ENCODE measurements at regions of chr19 and their contacts with region 1.

Region 1: GRCh38 chr19:44093931-44094765 is at the start of gene ZNF224:
- DNase-seq: peak; percentile 95
- H3K4me3 ChIP-seq: peak within 1 kb of the TSS; percentile 57 to 97 (median 95)
- H3K27ac ChIP-seq: peak within 1 kb of the TSS; percentile 42
- H3K4me1 ChIP-seq: peaks cover 8% of the 10 kb centered on the region
- H3K27me3 ChIP-seq: no peaks in the 10 kb centered on the region
- CTCF ChIP-seq: no peak
- POLR2A ChIP-seq: peak; percentile 59
- total RNA-seq, gene ZNF224: 19.4 and 21.8 TPM in 2 replicates

Region 2: GRCh38 chr19:43934985-43935708 is 159.0 kb before region 1 on chr19 and contains the start of gene ZNF45:
- CTCF ChIA-PET with region 1: interaction called, 4 read pairs
- POLR2A ChIA-PET with region 1: no interaction called
- dilution Hi-C with region 1: no loop called
- intact Hi-C with region 1: loop called (anchors 1 kb)
- DNase-seq: peak; percentile 93
- H3K4me3 ChIP-seq: peak within 1 kb of the TSS; percentile 43 to 94 (median 71)
- H3K27ac ChIP-seq: peak within 1 kb of the TSS; percentile 26
- H3K4me1 ChIP-seq: peaks cover 13% of the 10 kb centered on the region
- H3K27me3 ChIP-seq: no peaks in the 10 kb centered on the region
- CTCF ChIP-seq: no peak
- POLR2A ChIP-seq: peak; percentile 53
- total RNA-seq, gene ZNF45: 10.8 and 11.2 TPM in 2 replicates

Region 3: GRCh38 chr19:44032001-44032610 is 62.0 kb before region 1 on chr19:
- CTCF ChIA-PET with region 1: no interaction called
- POLR2A ChIA-PET with region 1: no interaction called
- dilution Hi-C with region 1: no loop called
- intact Hi-C with region 1: no loop called
- DNase-seq: no peak
- H3K4me3 ChIP-seq: no peak overlapping the region
- H3K27ac ChIP-seq: no peak overlapping the region
- H3K4me1 ChIP-seq: no peaks in the 10 kb centered on the region
- H3K27me3 ChIP-seq: no peaks in the 10 kb centered on the region
- CTCF ChIP-seq: no peak
- POLR2A ChIP-seq: no peak

Region 4: DNA sequence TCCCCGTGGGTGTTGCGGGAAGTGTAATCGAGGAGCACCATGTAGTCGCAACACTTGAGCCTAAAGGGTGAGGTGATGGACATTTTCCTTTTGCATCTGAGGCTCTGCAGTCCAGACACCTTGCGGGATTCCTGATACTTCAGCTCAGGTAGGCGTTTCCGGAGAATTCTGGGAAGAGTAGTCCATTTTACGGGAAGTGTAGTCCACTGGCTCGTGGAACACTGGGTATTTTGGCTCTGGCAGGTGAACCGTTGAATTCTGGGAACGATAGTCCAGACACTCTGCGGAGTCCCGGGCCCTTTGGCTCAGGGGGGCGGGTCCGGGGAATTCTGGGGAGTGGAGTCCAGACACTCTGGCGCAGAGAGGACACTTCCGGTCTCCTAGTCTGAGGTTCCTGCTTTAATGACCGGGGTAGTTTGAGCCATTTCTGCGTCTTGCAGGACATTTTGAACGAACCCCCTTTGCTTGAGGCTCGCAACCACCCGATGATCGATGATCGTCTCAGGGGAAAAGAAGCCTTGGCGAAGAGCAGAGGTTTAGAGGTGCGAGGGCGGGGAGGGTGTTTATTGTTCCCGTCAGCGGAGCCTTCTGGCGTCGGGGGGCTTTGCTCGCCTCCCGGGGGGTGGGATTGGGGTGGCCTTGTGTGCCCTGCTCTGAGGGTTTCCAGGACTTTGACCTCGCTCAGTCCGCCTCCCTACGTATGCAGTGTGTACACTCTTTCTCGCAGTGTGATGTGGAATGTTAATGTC is 42.3 kb before region 1 on chr19 and contains the start of gene ZNF223:
- CTCF ChIA-PET with region 1: no interaction called
- POLR2A ChIA-PET with region 1: no interaction called
- dilution Hi-C with region 1: no loop called
- intact Hi-C with region 1: loop called (anchors 1 kb)
- DNase-seq: peak; percentile 91
- H3K4me3 ChIP-seq: peak within 1 kb of the TSS; percentile 48 to 64 (median 61)
- H3K27ac ChIP-seq: no peak within 1 kb of the TSS
- H3K4me1 ChIP-seq: peaks cover 11% of the 10 kb centered on the region
- H3K27me3 ChIP-seq: peaks cover 4 to 9% of the 10 kb centered on the region in 2 experiments
- CTCF ChIP-seq: no peak
- POLR2A ChIP-seq: peak; percentile 53
- total RNA-seq, gene ZNF223: 3.4 and 3.7 TPM in 2 replicates

Region 5: GRCh38 chr19:44164673-44165512 is 70.7 kb after region 1 on chr19 and contains the start of gene ZNF226:
- CTCF ChIA-PET with region 1: interaction called, 3 read pairs
- POLR2A ChIA-PET with region 1: no interaction called
- dilution Hi-C with region 1: no loop called
- intact Hi-C with region 1: loop called (anchors 1 kb)
- DNase-seq: peak; percentile 98
- H3K4me3 ChIP-seq: peak within 1 kb of the TSS; percentile 56 to 87 (median 66)
- H3K27ac ChIP-seq: peak within 1 kb of the TSS; percentile 74
- H3K4me1 ChIP-seq: peaks cover 3% of the 10 kb centered on the region
- H3K27me3 ChIP-seq: no peaks in the 10 kb centered on the region
- CTCF ChIP-seq: no peak
- POLR2A ChIP-seq: no peak
- total RNA-seq, gene ZNF226: 19.7 and 19.8 TPM in 2 replicates

Region 6: GRCh38 chr19:44356383-44357111 is 262.4 kb after region 1 on chr19 and contains the start of gene ZNF112:
- CTCF ChIA-PET with region 1: no interaction called
- POLR2A ChIA-PET with region 1: no interaction called
- dilution Hi-C with region 1: no loop called
- intact Hi-C with region 1: loop called (anchors 1 kb)
- DNase-seq: peak; percentile 93
- H3K4me3 ChIP-seq: peak within 1 kb of the TSS; percentile 41 to 60 (median 58)
- H3K27ac ChIP-seq: no peak within 1 kb of the TSS
- H3K4me1 ChIP-seq: peaks cover 4% of the 10 kb centered on the region
- H3K27me3 ChIP-seq: no peaks in the 10 kb centered on the region
- CTCF ChIP-seq: no peak
- POLR2A ChIP-seq: peak; percentile 56
- total RNA-seq, gene ZNF112: 4.6 and 7.5 TPM in 2 replicates

Region 7: DNA sequence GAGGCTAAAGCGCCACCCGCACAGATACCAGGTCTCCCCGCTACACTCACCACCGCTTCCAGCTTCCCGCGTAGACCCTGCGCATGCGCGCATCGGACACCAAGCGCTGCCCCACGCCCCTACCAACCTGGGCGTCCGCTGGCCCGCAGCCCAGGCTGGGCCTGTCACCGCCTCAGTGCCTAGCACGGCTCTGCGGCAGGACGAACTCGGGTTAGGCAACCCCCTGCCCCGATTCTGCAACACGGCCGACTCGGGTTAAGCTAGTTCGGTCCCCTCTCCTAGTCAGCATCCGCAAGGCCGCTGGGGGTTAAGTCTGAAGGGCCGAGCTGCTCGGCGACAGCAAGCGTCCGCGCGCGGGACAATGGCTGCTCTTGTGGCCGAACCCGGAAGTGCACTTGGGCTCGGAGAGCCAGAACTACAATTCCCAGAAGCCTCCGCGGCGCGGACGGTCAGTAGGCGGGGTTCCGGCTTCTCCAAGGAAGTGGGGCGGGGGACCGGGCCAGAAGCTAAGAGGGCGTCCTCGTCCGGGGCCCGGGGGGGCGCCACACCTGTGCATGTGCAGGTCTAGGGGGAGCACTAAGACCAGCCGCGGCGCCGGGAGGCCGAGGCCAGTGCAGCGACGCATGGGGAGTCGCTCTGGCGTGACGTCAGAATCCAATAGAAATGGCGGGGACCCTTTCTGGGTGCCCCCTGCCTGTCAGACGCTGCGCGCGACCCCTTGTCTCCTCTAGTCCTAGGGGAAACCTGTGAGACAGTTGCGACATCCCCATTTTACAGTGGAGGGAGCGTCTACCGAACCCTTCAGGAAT is 406.2 kb after region 1 on chr19 and contains the start of gene ZNF180:
- CTCF ChIA-PET with region 1: no interaction called
- POLR2A ChIA-PET with region 1: no interaction called
- dilution Hi-C with region 1: no loop called
- intact Hi-C with region 1: loop called (anchors 2 kb)
- DNase-seq: peak; percentile 96
- H3K4me3 ChIP-seq: peak within 1 kb of the TSS; percentile 75 to 88 (median 77)
- H3K27ac ChIP-seq: peak within 1 kb of the TSS; percentile 59
- H3K4me1 ChIP-seq: peaks cover 11% of the 10 kb centered on the region
- H3K27me3 ChIP-seq: peaks cover 0 to 2% of the 10 kb centered on the region in 2 experiments
- CTCF ChIP-seq: peak; percentile 14 to 53
- POLR2A ChIP-seq: peak; percentile 77
- total RNA-seq, gene ZNF180: 8.6 and 8.9 TPM in 2 replicates

Measured in endothelial cell of umbilical vein (primary cell).